ENCODE measurements at regions of chr16 and their contacts with region 1.

Region 1: GRCh38 chr16:65833171-65833871 is 533.2 kb upstream of the CDH5 start:
- DNase-seq: peak; percentile 94
- H3K4me3 ChIP-seq: no peak overlapping the region
- H3K27ac ChIP-seq: peak overlapping the region; percentile 97
- H3K4me1 ChIP-seq: peaks cover 56% of the 10 kb centered on the region
- H3K27me3 ChIP-seq: no peaks in the 10 kb centered on the region
- CTCF ChIP-seq: no peak

Region 2: GRCh38 chr16:64991001-64991400 is 842.3 kb before region 1 on chr16:
- CTCF ChIA-PET with region 1: no interaction called
- POLR2A ChIA-PET with region 1: no interaction called
- intact Hi-C with region 1: loop called (anchors 2 kb)
- DNase-seq: peak; percentile 54
- H3K4me3 ChIP-seq: no peak overlapping the region
- H3K27ac ChIP-seq: peak overlapping the region; percentile 66
- H3K4me1 ChIP-seq: peaks cover 65% of the 10 kb centered on the region
- H3K27me3 ChIP-seq: no peaks in the 10 kb centered on the region
- CTCF ChIP-seq: no peak

Region 3: DNA sequence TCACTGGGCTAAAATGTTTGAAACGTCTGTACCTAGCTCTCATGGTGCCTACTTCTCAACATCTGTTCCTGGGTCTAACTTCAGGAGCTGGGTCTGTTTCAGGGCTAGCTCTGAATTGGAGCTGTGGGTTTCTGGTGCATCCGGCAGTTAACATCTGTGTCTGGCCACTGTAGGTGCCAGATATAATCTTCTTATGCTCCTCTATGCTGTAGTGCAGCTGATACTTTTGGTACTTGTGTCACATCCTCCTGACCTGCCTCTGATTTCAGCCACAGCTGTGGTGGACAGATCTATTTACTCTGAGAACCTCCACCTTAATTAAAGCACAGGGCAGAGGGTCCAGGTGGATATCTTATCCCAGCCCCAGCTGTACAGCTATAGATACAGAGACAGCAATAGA is 215.0 kb before region 1 on chr16:
- CTCF ChIA-PET with region 1: no interaction called
- POLR2A ChIA-PET with region 1: no interaction called
- intact Hi-C with region 1: loop called (anchors 2 kb)
- DNase-seq: peak; percentile 9
- H3K4me3 ChIP-seq: no peak overlapping the region
- H3K27ac ChIP-seq: peak overlapping the region; percentile 43
- H3K4me1 ChIP-seq: peaks cover 31% of the 10 kb centered on the region
- H3K27me3 ChIP-seq: no peaks in the 10 kb centered on the region
- CTCF ChIP-seq: no peak

Region 4: GRCh38 chr16:65932350-65933072 is 99.2 kb after region 1 on chr16:
- CTCF ChIA-PET with region 1: no interaction called
- POLR2A ChIA-PET with region 1: no interaction called
- intact Hi-C with region 1: no loop called
- DNase-seq: no peak
- H3K4me3 ChIP-seq: no peak overlapping the region
- H3K27ac ChIP-seq: no peak overlapping the region
- H3K4me1 ChIP-seq: no peaks in the 10 kb centered on the region
- H3K27me3 ChIP-seq: no peaks in the 10 kb centered on the region
- CTCF ChIP-seq: no peak

Region 5: GRCh38 chr16:66167564-66168291 is 334.4 kb after region 1 on chr16:
- CTCF ChIA-PET with region 1: no interaction called
- POLR2A ChIA-PET with region 1: no interaction called
- intact Hi-C with region 1: loop called (anchors 10 kb)
- DNase-seq: peak; percentile 46
- H3K4me3 ChIP-seq: no peak overlapping the region
- H3K27ac ChIP-seq: no peak overlapping the region
- H3K4me1 ChIP-seq: no peaks in the 10 kb centered on the region
- H3K27me3 ChIP-seq: no peaks in the 10 kb centered on the region
- CTCF ChIP-seq: peak; percentile 56

Region 6: GRCh38 chr16:66270333-66270927 is 437.1 kb after region 1 on chr16:
- CTCF ChIA-PET with region 1: interaction called, 4 read pairs
- POLR2A ChIA-PET with region 1: no interaction called
- intact Hi-C with region 1: loop called (anchors 2 kb)
- DNase-seq: peak; percentile 90
- H3K4me3 ChIP-seq: no peak overlapping the region
- H3K27ac ChIP-seq: peak overlapping the region; percentile 78
- H3K4me1 ChIP-seq: peaks cover 50% of the 10 kb centered on the region
- H3K27me3 ChIP-seq: no peaks in the 10 kb centered on the region
- CTCF ChIP-seq: peak; percentile 81

Measured in A673 (cell line).